ENCODE measurements at regions of chr15 and their contacts with region 1.

Region 1: DNA sequence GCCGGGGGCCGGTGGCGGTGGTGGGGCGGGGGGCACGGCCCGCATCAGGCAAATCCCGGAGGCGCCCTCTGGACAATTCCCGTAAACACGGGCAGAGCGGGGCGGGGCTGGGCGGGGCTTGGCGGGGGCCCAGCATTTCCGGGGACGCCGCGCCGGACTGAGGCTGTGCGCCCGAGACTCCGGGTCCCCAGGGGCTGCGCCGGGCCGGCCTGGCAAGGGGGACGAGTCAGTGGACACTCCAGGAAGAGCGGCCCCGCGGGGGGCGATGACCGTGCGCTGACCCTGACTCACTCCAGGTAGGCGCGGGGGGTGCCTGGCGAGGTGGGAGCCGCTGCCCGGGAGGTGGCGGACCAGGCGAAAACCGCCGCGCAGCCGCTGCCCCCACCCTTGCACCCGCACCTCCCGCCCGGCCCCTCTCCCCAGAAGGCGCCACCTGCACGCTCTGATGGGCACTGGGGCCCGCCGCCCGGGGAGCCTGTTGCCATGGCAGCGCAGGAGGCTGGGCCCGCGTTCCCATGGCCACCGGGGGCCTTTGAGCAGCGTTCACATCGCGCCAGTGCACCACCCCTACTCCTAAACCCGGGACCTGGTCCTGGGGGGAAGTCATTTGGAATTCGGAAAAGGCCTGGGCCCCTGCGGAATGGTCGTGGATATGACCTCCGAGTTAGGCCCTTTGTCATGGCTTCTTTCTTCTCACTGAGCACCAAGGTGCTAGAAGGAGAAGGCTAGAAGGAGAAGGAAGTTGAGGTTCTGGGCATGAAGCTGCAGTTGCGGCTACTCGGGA is 16.2 kb upstream of the SEMA4B start:
- DNase-seq: peak; percentile 62 to 89 (median 79)
- ATAC-seq: peak; percentile 56 to 88 (median 85)
- H3K4me3 ChIP-seq: peak overlapping the region; percentile 49 to 91 (median 71)
- H3K27ac ChIP-seq: peak overlapping the region; percentile 79 to 98 (median 88)
- H3K4me1 ChIP-seq: peaks cover 0 to 58% (median 9%) of the 10 kb centered on the region in 12 donors
- H3K27me3 ChIP-seq: peaks cover 0 to 16% (median 0%) of the 10 kb centered on the region in 9 donors
- CTCF ChIP-seq: no peak
- POLR2A ChIP-seq: peak in 1 of 2 donors; percentile 73

Region 2: GRCh38 chr15:90174140-90174875 is 10.7 kb before region 1 on chr15:
- intact Hi-C with region 1: loop called in 3 of 10 experiments (anchors 1 kb)
- DNase-seq: peak; percentile 88 to 97 (median 90)
- ATAC-seq: peak; percentile 87 to 92 (median 88)
- H3K4me3 ChIP-seq: peak overlapping the region in 3 of 12 donors; percentile 7 to 31 (median 23)
- H3K27ac ChIP-seq: peak overlapping the region; percentile 87 to 99 (median 94)
- H3K4me1 ChIP-seq: peaks cover 0 to 20% (median 7%) of the 10 kb centered on the region in 12 donors
- H3K27me3 ChIP-seq: no peaks in the 10 kb centered on the region
- CTCF ChIP-seq: no peak
- POLR2A ChIP-seq: no peak

Region 3: GRCh38 chr15:90221246-90221900 is 36.4 kb after region 1 on chr15:
- intact Hi-C with region 1: loop called in 1 of 10 experiments (anchors 5 kb)
- DNase-seq: peak; percentile 80 to 85 (median 82)
- ATAC-seq: peak; percentile 55 to 87 (median 80)
- H3K4me3 ChIP-seq: no peak overlapping the region
- H3K27ac ChIP-seq: peak overlapping the region in 8 of 12 donors; percentile 25 to 62 (median 50)
- H3K4me1 ChIP-seq: peaks cover 0 to 14% (median 8%) of the 10 kb centered on the region in 12 donors
- H3K27me3 ChIP-seq: no peaks in the 10 kb centered on the region
- CTCF ChIP-seq: peak; percentile 62 to 89 (median 72)
- POLR2A ChIP-seq: no peak

Measured in heart left ventricle (tissue), 16 donors.